ENCODE measurements at regions of chr16 and their contacts with region 1.

Region 1: DNA sequence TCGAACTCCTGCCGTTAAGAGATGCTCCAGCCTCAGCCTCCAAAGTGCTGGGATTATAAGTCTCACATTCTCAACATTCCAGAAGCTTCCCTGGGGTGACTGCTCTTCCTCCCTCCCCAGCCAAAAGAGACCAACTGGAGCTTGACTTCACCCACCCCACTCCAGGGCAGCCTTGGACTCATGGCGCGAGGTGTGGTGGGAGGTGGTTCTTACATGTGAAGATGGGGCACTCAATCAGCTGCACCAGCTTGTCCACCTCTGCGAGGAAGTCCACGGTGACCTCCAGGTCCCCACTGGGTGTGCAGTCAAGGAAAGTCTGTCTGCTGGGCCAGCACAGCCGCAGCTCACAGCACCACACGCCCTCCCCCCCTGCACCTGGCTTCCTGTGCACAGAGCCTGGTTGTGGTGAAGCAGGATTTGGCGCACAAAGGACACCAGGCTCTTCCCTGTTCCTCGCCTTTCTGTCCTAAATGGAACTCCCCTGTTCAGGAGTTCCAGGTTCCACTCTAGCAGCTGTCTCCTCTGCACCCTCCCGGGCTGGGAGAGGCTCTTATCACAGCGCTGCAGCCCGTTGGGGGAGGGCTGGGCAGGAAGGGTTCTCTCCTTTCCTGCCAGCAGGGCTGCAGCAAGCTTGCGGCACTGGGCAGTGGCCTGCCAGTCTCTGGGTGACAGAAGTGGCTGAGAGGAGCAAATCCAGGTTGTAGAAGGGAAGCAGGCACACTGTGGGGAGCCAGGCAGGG is 9.6 kb upstream of the MTSS2 start:
- DNase-seq: peak in 4 of 14 experiments; percentile 6 to 27 (median 14)
- ATAC-seq: peak; percentile 30
- H3K4me3 ChIP-seq: no peak overlapping the region
- H3K4me3 Mint-ChIP-seq: no peak overlapping the region
- H3K27ac ChIP-seq: no peak overlapping the region
- H3K27ac Mint-ChIP-seq: peak overlapping the region; percentile 87
- H3K4me1 ChIP-seq: peaks cover 20% of the 10 kb centered on the region
- H3K4me1 Mint-ChIP-seq: peaks cover 35% of the 10 kb centered on the region
- H3K27me3 ChIP-seq: no peaks in the 10 kb centered on the region
- H3K27me3 Mint-ChIP-seq: no peaks in the 10 kb centered on the region
- CTCF ChIP-seq: no peak

Region 2: GRCh38 chr16:70646260-70647241 is 49.0 kb before region 1 on chr16 and contains the start of gene IL34:
- CTCF ChIA-PET with region 1: no interaction called
- POLR2A ChIA-PET with region 1: no interaction called
- intact Hi-C with region 1: no loop called
- DNase-seq: no peak
- ATAC-seq: no peak
- H3K4me3 ChIP-seq: no peak within 1 kb of the TSS
- H3K4me3 Mint-ChIP-seq: no peak within 1 kb of the TSS
- H3K27ac ChIP-seq: no peak within 1 kb of the TSS
- H3K27ac Mint-ChIP-seq: no peak within 1 kb of the TSS
- H3K4me1 ChIP-seq: no peaks in the 10 kb centered on the region
- H3K4me1 Mint-ChIP-seq: no peaks in the 10 kb centered on the region
- H3K27me3 ChIP-seq: no peaks in the 10 kb centered on the region
- H3K27me3 Mint-ChIP-seq: no peaks in the 10 kb centered on the region
- CTCF ChIP-seq: no peak
- total RNA-seq, gene IL34: 0.84 to 0.88 TPM

Region 3: DNA sequence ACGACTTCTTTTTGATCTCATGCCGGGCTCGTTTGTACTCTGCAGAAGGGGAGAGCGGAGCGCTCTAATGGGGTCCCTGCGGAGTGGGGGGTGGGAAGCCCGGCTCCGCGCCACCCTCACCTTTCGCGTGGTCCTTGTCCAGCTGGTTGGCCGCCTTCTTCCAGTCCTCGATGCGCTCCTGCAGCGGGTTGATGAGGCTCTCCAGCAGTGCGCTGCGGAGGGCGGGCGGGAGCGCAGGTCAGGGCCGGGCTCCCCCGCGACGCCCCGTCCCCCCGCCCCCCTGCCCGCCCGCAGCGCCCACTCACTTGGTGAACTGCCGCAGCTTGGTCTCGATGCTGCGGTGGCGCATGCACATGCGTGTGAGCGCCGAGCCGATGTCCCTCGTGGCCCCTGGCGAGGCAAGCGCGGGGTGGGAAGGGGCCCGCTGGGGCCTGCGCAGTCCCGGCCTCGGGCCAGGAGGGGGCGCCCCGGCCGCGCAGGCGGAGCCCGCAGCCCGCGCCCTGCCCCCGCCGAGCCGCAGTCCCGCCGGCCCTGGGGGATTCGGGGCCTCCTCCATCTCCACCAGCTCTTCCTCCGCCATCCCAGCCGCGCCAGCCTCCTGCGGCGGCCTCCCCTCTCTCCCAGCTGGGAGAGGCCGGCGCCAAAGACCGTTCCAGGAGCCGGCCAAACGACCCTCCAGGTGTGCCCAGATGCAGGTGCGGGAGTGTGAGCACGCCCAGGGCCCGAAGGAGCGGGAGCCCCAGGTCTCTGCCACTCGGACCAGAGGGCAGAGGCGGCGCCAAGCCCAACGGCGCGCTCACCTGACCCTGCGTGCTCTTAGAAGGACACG is 15.6 kb before region 1 on chr16:
- CTCF ChIA-PET with region 1: no interaction called
- POLR2A ChIA-PET with region 1: no interaction called
- intact Hi-C with region 1: no loop called
- DNase-seq: peak in 2 of 14 experiments; percentile 4 to 24
- ATAC-seq: peak; percentile 60
- H3K4me3 ChIP-seq: no peak overlapping the region
- H3K4me3 Mint-ChIP-seq: no peak overlapping the region
- H3K27ac ChIP-seq: no peak overlapping the region
- H3K27ac Mint-ChIP-seq: no peak overlapping the region
- H3K4me1 ChIP-seq: peaks cover 4% of the 10 kb centered on the region
- H3K4me1 Mint-ChIP-seq: no peaks in the 10 kb centered on the region
- H3K27me3 ChIP-seq: peaks cover 16 to 26% of the 10 kb centered on the region in 2 experiments
- H3K27me3 Mint-ChIP-seq: peaks cover 3% of the 10 kb centered on the region
- CTCF ChIP-seq: no peak

Region 4: GRCh38 chr16:70737377-70738082 is 42.0 kb after region 1 on chr16:
- CTCF ChIA-PET with region 1: no interaction called
- POLR2A ChIA-PET with region 1: interaction called, 6 read pairs
- intact Hi-C with region 1: loop called in 1 of 2 experiments (anchors 5 kb)
- DNase-seq: peak; percentile 33 to 80 (median 54)
- ATAC-seq: peak; percentile 85
- H3K4me3 ChIP-seq: peak overlapping the region; percentile 21
- H3K4me3 Mint-ChIP-seq: peak overlapping the region; percentile 76
- H3K27ac ChIP-seq: peak overlapping the region; percentile 73 to 81
- H3K27ac Mint-ChIP-seq: peak overlapping the region; percentile 98
- H3K4me1 ChIP-seq: peaks cover 47% of the 10 kb centered on the region
- H3K4me1 Mint-ChIP-seq: peaks cover 75% of the 10 kb centered on the region
- H3K27me3 ChIP-seq: no peaks in the 10 kb centered on the region
- H3K27me3 Mint-ChIP-seq: no peaks in the 10 kb centered on the region
- CTCF ChIP-seq: no peak